H1 (cell line): ENCODE measurements at regions of chr22 and their contacts with region 1.

Region 1: GRCh38 chr22:38513063-38513462 is 7.0 kb upstream of the DDX17 start:
- DNase-seq: no peak
- H3K4me3 ChIP-seq: no peak overlapping the region
- H3K27ac ChIP-seq: no peak overlapping the region
- H3K4me1 ChIP-seq: peaks cover 0 to 5% (median 3%) of the 10 kb centered on the region in 4 experiments; a peak in 5 of 7 replicates
- H3K27me3 ChIP-seq: no peaks in the 10 kb centered on the region
- CTCF ChIP-seq: peak; percentile 47 to 78 (median 65); a peak in 3 of 4 replicates
- EP300 ChIP-seq: no peak
- POLR2A ChIP-seq: no peak
- RAD21 ChIP-seq: peak; percentile 30 to 52; a peak in 3 of 4 replicates

Region 2: GRCh38 chr22:38490915-38491314 is 22.1 kb before region 1 on chr22:
- CTCF ChIA-PET with region 1: interaction called, 4 read pairs
- POLR2A ChIA-PET with region 1: interaction called, 36 read pairs
- DNase-seq: no peak
- H3K4me3 ChIP-seq: no peak overlapping the region
- H3K27ac ChIP-seq: no peak overlapping the region
- H3K4me1 ChIP-seq: peaks cover 0 to 4% (median 4%) of the 10 kb centered on the region in 4 experiments; a peak in 3 of 7 replicates
- H3K27me3 ChIP-seq: no peaks in the 10 kb centered on the region
- CTCF ChIP-seq: no peak
- EP300 ChIP-seq: no peak
- POLR2A ChIP-seq: peak; percentile 16 to 27; a peak in 2 of 3 replicates
- RAD21 ChIP-seq: no peak

Region 3: DNA sequence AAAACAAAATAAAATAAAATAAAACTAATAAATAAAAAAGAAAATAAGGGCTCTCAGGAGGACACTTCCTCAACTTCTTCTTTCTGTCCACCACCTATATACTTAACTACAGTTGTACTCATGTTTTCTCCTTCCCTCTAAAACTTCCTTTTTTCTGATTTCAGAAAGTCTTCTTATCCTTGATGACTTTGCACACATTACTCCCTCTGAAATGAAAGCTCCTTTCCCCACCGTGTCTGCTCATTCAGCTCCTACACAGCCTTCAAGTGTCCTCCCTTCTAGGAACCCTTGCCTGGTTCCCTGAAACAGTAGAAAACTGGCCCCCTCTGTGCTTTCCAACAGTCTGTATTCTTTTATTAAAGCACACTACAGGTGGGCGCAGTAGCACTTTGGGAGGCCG is 11.4 kb after region 1 on chr22:
- CTCF ChIA-PET with region 1: interaction called, 18 read pairs
- POLR2A ChIA-PET with region 1: interaction called, 9 read pairs
- DNase-seq: peak in 1 of 2 experiments; percentile 2
- H3K4me3 ChIP-seq: no peak overlapping the region
- H3K27ac ChIP-seq: no peak overlapping the region
- H3K4me1 ChIP-seq: no peaks in the 10 kb centered on the region
- H3K27me3 ChIP-seq: no peaks in the 10 kb centered on the region
- CTCF ChIP-seq: no peak
- EP300 ChIP-seq: no peak
- POLR2A ChIP-seq: no peak
- RAD21 ChIP-seq: no peak